CD8-positive, alpha-beta T cell (primary cell): ENCODE measurements at regions of chr1 and their contacts with region 1.

Region 1: GRCh38 chr1:40691538-40692428 is at the start of gene NFYC:
- DNase-seq: peak; percentile 88 to 99 (median 93)
- ATAC-seq: peak; percentile 77
- H3K4me3 ChIP-seq: peak within 1 kb of the TSS; percentile 67 to 97
- H3K4me3 Mint-ChIP-seq: peak within 1 kb of the TSS; percentile 92
- H3K27ac ChIP-seq: peak within 1 kb of the TSS; percentile 92 to 99
- H3K27ac Mint-ChIP-seq: peak within 1 kb of the TSS; percentile 96
- H3K4me1 ChIP-seq: peaks cover 25% of the 10 kb centered on the region
- H3K4me1 Mint-ChIP-seq: peaks cover 61% of the 10 kb centered on the region
- H3K27me3 ChIP-seq: no peaks in the 10 kb centered on the region
- H3K27me3 Mint-ChIP-seq: no peaks in the 10 kb centered on the region
- CTCF ChIP-seq: no peak
- total RNA-seq, gene NFYC: 31.3 to 31.6 TPM

Region 2: GRCh38 chr1:40040511-40041465 is 651.0 kb before region 1 on chr1 and contains the start of gene CAP1:
- CTCF ChIA-PET with region 1: no interaction called
- POLR2A ChIA-PET with region 1: no interaction called
- intact Hi-C with region 1: loop called in 1 of 2 experiments (anchors 10 kb)
- DNase-seq: peak; percentile 99 to 100 (median 100)
- ATAC-seq: peak; percentile 89
- H3K4me3 ChIP-seq: peak within 1 kb of the TSS; percentile 99
- H3K4me3 Mint-ChIP-seq: peak within 1 kb of the TSS; percentile 89
- H3K27ac ChIP-seq: peak within 1 kb of the TSS; percentile 92 to 94
- H3K27ac Mint-ChIP-seq: peak within 1 kb of the TSS; percentile 93
- H3K4me1 ChIP-seq: peaks cover 71% of the 10 kb centered on the region
- H3K4me1 Mint-ChIP-seq: peaks cover 70% of the 10 kb centered on the region
- H3K27me3 ChIP-seq: no peaks in the 10 kb centered on the region
- H3K27me3 Mint-ChIP-seq: no peaks in the 10 kb centered on the region
- CTCF ChIP-seq: no peak
- total RNA-seq, gene CAP1: 123 to 126 TPM

Region 3: DNA sequence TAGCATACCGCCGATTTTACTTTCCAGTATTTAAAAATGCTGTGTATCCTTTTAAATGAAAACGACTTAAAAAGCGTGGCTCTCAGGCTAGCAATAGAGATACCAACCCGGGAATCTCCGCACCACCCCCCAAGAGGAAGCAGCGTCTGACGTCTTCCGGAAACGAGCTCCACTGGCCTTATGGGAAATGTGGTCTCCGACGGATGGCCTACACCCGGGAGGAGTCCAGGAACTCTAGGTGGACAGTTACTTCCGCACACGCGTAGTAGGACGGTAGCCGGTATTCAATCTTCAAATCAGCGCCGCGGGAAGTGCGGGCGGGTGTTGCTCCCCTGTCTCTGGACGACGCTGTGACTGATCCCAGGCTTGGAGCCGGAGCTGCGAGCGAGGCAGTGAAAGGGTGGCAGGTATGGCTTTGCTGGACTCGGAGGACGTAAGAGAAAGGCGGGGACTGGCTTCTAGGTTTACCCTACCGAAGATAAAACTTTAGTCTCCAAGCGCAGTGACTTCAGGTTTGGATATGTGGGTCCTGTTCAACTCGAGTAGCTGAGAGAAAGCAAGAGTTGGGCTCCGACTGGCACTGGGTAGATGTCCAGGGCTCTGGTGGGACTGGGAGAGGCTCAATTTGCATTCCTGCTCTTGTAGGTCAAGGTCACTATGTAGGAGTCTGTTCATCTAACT is 160.3 kb before region 1 on chr1 and contains the start of gene ZNF684:
- CTCF ChIA-PET with region 1: no interaction called
- POLR2A ChIA-PET with region 1: interaction called, 10 read pairs
- intact Hi-C with region 1: no loop called
- DNase-seq: peak; percentile 64 to 96 (median 85)
- ATAC-seq: peak; percentile 96
- H3K4me3 ChIP-seq: peak within 1 kb of the TSS; percentile 68 to 71
- H3K4me3 Mint-ChIP-seq: peak within 1 kb of the TSS; percentile 100
- H3K27ac ChIP-seq: peak within 1 kb of the TSS; percentile 57 to 83
- H3K27ac Mint-ChIP-seq: peak within 1 kb of the TSS; percentile 93
- H3K4me1 ChIP-seq: peaks cover 11% of the 10 kb centered on the region
- H3K4me1 Mint-ChIP-seq: peaks cover 28% of the 10 kb centered on the region
- H3K27me3 ChIP-seq: peaks cover 0 to 3% of the 10 kb centered on the region in 2 experiments
- H3K27me3 Mint-ChIP-seq: peaks cover 6% of the 10 kb centered on the region
- CTCF ChIP-seq: no peak
- total RNA-seq, gene ZNF684: 2.9 TPM

Region 4: DNA sequence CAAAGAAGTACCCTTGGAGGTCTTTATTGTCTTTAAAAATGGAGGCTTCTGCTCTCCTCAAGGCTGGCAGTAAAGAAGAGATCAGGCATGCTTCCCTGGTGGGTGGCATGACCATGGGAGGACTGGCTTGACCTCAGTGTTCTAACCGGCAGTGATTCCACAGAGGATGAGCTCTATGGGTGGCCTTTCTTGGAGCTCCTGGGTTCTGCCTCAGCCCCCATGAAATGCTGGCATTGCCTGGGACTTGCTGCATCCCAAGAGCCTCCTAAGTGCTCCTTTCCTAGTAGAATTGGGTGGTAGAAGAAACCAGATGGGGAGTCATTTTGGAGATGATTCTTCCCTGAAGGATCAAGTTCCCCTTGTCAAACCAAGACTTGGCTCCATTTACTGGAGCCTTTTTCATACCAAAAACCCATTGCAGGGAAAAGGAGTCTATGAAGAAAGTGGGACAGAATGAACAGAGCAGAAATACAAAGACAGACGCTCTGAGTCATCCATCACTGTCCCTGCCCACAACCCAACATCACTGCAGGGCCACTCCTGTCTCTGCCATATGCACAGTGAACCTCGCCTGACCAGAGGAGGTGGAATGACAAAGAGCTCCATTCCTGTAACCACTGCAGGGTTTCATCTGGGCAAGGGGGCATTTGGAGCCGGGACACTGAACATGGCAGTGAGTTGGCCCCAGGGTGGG is 68.7 kb before region 1 on chr1:
- CTCF ChIA-PET with region 1: no interaction called
- POLR2A ChIA-PET with region 1: no interaction called
- intact Hi-C with region 1: no loop called
- DNase-seq: no peak
- ATAC-seq: no peak
- H3K4me3 ChIP-seq: no peak overlapping the region
- H3K4me3 Mint-ChIP-seq: no peak overlapping the region
- H3K27ac ChIP-seq: no peak overlapping the region
- H3K27ac Mint-ChIP-seq: no peak overlapping the region
- H3K4me1 ChIP-seq: no peaks in the 10 kb centered on the region
- H3K4me1 Mint-ChIP-seq: peaks cover 3% of the 10 kb centered on the region
- H3K27me3 ChIP-seq: no peaks in the 10 kb centered on the region
- H3K27me3 Mint-ChIP-seq: no peaks in the 10 kb centered on the region
- CTCF ChIP-seq: no peak

Region 5: GRCh38 chr1:40679165-40679953 is 12.4 kb before region 1 on chr1:
- CTCF ChIA-PET with region 1: interaction called, 6 read pairs
- POLR2A ChIA-PET with region 1: interaction called, 14 read pairs
- intact Hi-C with region 1: no loop called
- DNase-seq: no peak
- ATAC-seq: no peak
- H3K4me3 ChIP-seq: no peak overlapping the region
- H3K4me3 Mint-ChIP-seq: no peak overlapping the region
- H3K27ac ChIP-seq: no peak overlapping the region
- H3K27ac Mint-ChIP-seq: no peak overlapping the region
- H3K4me1 ChIP-seq: no peaks in the 10 kb centered on the region
- H3K4me1 Mint-ChIP-seq: no peaks in the 10 kb centered on the region
- H3K27me3 ChIP-seq: no peaks in the 10 kb centered on the region
- H3K27me3 Mint-ChIP-seq: peaks cover 6% of the 10 kb centered on the region
- CTCF ChIP-seq: no peak

Region 6: DNA sequence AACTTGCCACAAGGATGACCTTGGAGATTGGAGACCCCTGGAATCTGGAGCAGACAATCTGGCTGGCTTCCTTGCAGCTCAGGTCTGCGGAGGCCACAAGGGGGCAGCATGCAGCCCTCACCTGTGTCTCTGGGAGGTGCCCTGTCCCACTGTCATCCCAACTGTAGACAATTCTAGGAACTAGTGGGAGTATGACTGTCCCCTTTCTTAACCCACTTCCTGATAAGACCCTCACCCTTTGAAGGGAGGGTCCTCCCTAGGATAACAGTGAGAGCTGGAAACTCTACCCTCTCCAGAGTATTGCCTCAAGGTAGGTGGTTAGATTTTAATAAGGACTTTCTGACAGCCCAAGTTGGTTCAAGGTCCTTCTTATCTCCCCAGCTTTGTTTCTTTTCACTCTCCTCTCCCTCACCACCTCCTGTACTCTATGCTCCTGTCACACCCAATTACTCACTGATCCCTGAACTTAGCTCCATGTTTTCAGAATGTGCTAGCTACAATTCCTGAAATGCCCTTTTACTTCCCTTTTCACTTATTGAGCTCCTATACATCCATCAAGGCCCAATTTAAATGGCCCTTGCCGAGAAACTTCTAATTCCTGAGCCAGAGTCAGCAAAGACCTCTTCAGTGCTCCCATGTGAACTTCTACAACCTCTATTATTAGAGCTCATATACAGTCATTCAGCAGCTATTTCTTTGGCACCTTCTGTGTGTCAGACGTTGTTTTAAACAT is 82.6 kb after region 1 on chr1:
- CTCF ChIA-PET with region 1: interaction called, 6 read pairs
- POLR2A ChIA-PET with region 1: interaction called, 13 read pairs
- intact Hi-C with region 1: no loop called
- DNase-seq: peak; percentile 43 to 81 (median 72)
- ATAC-seq: peak; percentile 66
- H3K4me3 ChIP-seq: no peak overlapping the region
- H3K4me3 Mint-ChIP-seq: no peak overlapping the region
- H3K27ac ChIP-seq: no peak overlapping the region
- H3K27ac Mint-ChIP-seq: no peak overlapping the region
- H3K4me1 ChIP-seq: no peaks in the 10 kb centered on the region
- H3K4me1 Mint-ChIP-seq: no peaks in the 10 kb centered on the region
- H3K27me3 ChIP-seq: no peaks in the 10 kb centered on the region
- H3K27me3 Mint-ChIP-seq: no peaks in the 10 kb centered on the region
- CTCF ChIP-seq: peak; percentile 84

Region 7: DNA sequence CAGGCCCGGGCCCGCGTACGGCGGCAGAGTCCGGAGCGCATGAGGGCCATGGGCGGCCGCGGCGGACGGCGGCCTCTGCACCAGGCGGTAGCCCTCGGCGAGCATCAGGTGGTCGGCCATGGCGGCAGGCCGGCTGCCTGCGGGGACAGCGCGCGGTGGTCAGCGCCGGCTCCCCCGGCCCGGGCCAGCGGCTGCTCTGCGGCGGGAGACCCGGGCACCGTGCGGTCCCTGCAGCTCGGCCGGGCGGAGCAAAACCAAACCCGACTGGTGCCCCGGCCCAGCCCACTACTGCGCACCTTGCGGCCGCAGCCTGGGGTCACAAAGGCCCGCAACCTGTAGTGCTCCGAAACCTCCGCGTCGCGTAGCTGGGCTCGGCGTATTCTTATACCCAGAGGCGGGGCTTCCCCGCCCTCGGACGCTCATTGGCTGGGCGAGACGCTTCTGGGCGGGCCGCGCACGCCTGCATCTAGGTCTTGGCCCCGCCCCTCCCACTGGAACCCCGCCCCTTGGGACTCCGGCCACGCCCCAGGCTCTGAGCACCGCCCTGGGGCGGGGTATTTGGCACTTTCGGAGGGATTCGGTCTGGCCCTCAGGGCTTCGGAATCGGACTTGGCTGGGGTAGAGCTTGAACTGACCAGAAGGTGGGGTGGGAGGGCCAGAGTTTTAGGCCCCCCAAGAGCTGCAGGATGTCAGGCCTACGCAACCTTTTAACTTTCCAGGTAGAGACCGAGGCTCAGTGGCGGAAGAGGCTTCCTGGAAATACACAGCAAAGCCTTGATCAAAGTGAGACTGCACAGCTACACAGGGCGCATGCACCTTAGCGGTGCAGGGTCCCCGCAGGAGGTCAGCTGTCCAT is 170.5 kb after region 1 on chr1 and contains the start of gene CITED4:
- CTCF ChIA-PET with region 1: interaction called, 3 read pairs
- POLR2A ChIA-PET with region 1: interaction called, 17 read pairs
- intact Hi-C with region 1: loop called (anchors 1 to 5 kb)
- DNase-seq: peak; percentile 93 to 97 (median 95)
- ATAC-seq: peak; percentile 97
- H3K4me3 ChIP-seq: peak within 1 kb of the TSS; percentile 63 to 78
- H3K4me3 Mint-ChIP-seq: peak within 1 kb of the TSS; percentile 95
- H3K27ac ChIP-seq: peak within 1 kb of the TSS; percentile 67 to 74
- H3K27ac Mint-ChIP-seq: peak within 1 kb of the TSS; percentile 98
- H3K4me1 ChIP-seq: peaks cover 17% of the 10 kb centered on the region
- H3K4me1 Mint-ChIP-seq: peaks cover 14% of the 10 kb centered on the region
- H3K27me3 ChIP-seq: no peaks in the 10 kb centered on the region
- H3K27me3 Mint-ChIP-seq: no peaks in the 10 kb centered on the region
- CTCF ChIP-seq: no peak
- total RNA-seq, gene CITED4: 31.4 to 34.2 TPM

Region 8: GRCh38 chr1:40898431-40898901 is 206.7 kb after region 1 on chr1:
- CTCF ChIA-PET with region 1: no interaction called
- POLR2A ChIA-PET with region 1: no interaction called
- intact Hi-C with region 1: no loop called
- DNase-seq: peak in 1 of 9 experiments; percentile 24
- ATAC-seq: no peak
- H3K4me3 ChIP-seq: no peak overlapping the region
- H3K4me3 Mint-ChIP-seq: no peak overlapping the region
- H3K27ac ChIP-seq: no peak overlapping the region
- H3K27ac Mint-ChIP-seq: no peak overlapping the region
- H3K4me1 ChIP-seq: no peaks in the 10 kb centered on the region
- H3K4me1 Mint-ChIP-seq: no peaks in the 10 kb centered on the region
- H3K27me3 ChIP-seq: no peaks in the 10 kb centered on the region
- H3K27me3 Mint-ChIP-seq: peaks cover 2% of the 10 kb centered on the region
- CTCF ChIP-seq: no peak

Region 9: GRCh38 chr1:41003640-41004220 is 311.9 kb after region 1 on chr1:
- CTCF ChIA-PET with region 1: no interaction called
- POLR2A ChIA-PET with region 1: no interaction called
- intact Hi-C with region 1: loop called in 1 of 2 experiments (anchors 1 kb)
- DNase-seq: peak; percentile 71 to 94 (median 90)
- ATAC-seq: peak; percentile 98
- H3K4me3 ChIP-seq: no peak overlapping the region
- H3K4me3 Mint-ChIP-seq: no peak overlapping the region
- H3K27ac ChIP-seq: peak overlapping the region in 1 of 2 experiments; percentile 51
- H3K27ac Mint-ChIP-seq: peak overlapping the region; percentile 23
- H3K4me1 ChIP-seq: peaks cover 15% of the 10 kb centered on the region
- H3K4me1 Mint-ChIP-seq: peaks cover 20% of the 10 kb centered on the region
- H3K27me3 ChIP-seq: no peaks in the 10 kb centered on the region
- H3K27me3 Mint-ChIP-seq: no peaks in the 10 kb centered on the region
- CTCF ChIP-seq: peak; percentile 33